ENCODE measurements at regions of chr5 and their contacts with region 1.

Region 1: DNA sequence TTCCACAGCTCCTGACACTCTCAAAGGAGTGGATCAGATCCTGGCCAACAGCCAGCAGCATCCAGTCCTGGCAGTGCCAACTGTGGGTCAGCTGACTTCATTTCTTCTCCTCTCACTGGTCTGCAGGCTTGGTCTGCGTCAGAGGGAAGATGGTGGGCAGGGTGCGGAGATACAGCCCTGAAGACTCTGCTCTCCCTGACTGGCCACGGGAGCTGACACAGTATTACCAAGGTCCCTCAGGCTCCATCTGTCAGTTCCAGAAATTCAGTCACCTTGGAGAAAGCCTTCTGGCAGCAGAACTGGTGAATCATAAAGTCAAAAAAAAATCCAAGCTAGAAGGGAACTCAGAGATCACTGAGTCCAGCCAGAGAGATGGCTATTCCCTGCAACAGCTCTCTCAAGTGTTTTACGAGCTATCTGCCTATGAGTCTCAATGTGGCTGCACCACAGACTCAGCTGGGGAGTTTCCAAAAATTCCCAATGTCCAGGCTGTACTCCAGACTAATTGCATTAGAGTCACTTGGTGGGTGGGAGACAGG is 28.0 kb downstream of the C1QTNF2 start:
- DNase-seq: no peak
- ATAC-seq: no peak
- H3K4me3 Mint-ChIP-seq: no peak overlapping the region
- H3K27ac Mint-ChIP-seq: no peak overlapping the region
- H3K4me1 Mint-ChIP-seq: peaks cover 6% of the 10 kb centered on the region
- H3K27me3 Mint-ChIP-seq: no peaks in the 10 kb centered on the region
- CTCF ChIP-seq: no peak

Region 2: GRCh38 chr5:160021831-160022446 is 320.5 kb before region 1 on chr5:
- CTCF ChIA-PET with region 1: interaction called, 38 read pairs
- POLR2A ChIA-PET with region 1: no interaction called
- intact Hi-C with region 1: loop called (anchors 5 kb)
- DNase-seq: peak; percentile 56
- ATAC-seq: peak; percentile 98
- H3K4me3 Mint-ChIP-seq: no peak overlapping the region
- H3K27ac Mint-ChIP-seq: no peak overlapping the region
- H3K4me1 Mint-ChIP-seq: peaks cover 29% of the 10 kb centered on the region
- H3K27me3 Mint-ChIP-seq: no peaks in the 10 kb centered on the region
- CTCF ChIP-seq: peak; percentile 93

Region 3: DNA sequence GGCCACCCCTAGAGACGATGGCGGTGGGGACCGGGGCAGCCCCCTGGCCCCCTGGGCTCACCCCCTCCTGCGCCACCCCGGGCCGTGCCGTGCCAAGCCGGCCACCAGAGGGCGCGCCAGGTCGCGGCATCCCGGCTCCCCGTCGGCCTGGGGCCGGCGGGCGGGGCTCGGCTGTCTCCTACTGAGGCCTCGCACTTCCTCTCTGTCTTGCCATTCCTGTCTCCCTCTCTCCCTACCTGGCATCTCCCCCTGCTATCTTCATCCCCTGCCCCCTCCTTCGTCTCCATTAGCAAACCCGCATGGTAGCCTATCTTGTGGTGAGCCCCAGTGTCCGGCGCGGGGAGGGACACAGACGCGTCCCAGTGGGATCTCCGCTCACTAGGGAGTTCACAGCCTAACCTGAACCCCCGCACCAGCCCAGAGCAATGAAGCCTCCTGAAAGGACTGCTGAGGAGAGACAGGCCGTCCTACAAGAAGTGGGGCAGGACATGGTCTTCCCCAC is 143.0 kb before region 1 on chr5:
- CTCF ChIA-PET with region 1: interaction called, 119 read pairs
- POLR2A ChIA-PET with region 1: no interaction called
- intact Hi-C with region 1: loop called (anchors 1 kb)
- DNase-seq: peak; percentile 73
- ATAC-seq: peak; percentile 100
- H3K4me3 Mint-ChIP-seq: peak overlapping the region; percentile 58
- H3K27ac Mint-ChIP-seq: no peak overlapping the region
- H3K4me1 Mint-ChIP-seq: peaks cover 6% of the 10 kb centered on the region
- H3K27me3 Mint-ChIP-seq: peaks cover 4% of the 10 kb centered on the region
- CTCF ChIP-seq: peak; percentile 84

Region 4: GRCh38 chr5:160312134-160312959 is 30.1 kb before region 1 on chr5 and contains the start of gene CCNJL:
- CTCF ChIA-PET with region 1: interaction called, 10 read pairs
- POLR2A ChIA-PET with region 1: no interaction called
- intact Hi-C with region 1: no loop called
- DNase-seq: peak; percentile 23
- ATAC-seq: peak; percentile 61
- H3K4me3 Mint-ChIP-seq: peak within 1 kb of the TSS; percentile 68
- H3K27ac Mint-ChIP-seq: no peak within 1 kb of the TSS
- H3K4me1 Mint-ChIP-seq: peaks cover 8% of the 10 kb centered on the region
- H3K27me3 Mint-ChIP-seq: peaks cover 54% of the 10 kb centered on the region
- CTCF ChIP-seq: no peak
- total RNA-seq, gene CCNJL: not detected

Region 5: GRCh38 chr5:160324886-160325285 is 17.6 kb before region 1 on chr5:
- CTCF ChIA-PET with region 1: no interaction called
- POLR2A ChIA-PET with region 1: no interaction called
- intact Hi-C with region 1: no loop called
- DNase-seq: no peak
- ATAC-seq: no peak
- H3K4me3 Mint-ChIP-seq: no peak overlapping the region
- H3K27ac Mint-ChIP-seq: no peak overlapping the region
- H3K4me1 Mint-ChIP-seq: peaks cover 2% of the 10 kb centered on the region
- H3K27me3 Mint-ChIP-seq: peaks cover 4% of the 10 kb centered on the region
- CTCF ChIP-seq: no peak

Region 6: GRCh38 chr5:160357861-160358411 is 15.5 kb after region 1 on chr5:
- CTCF ChIA-PET with region 1: interaction called, 12 read pairs
- POLR2A ChIA-PET with region 1: no interaction called
- intact Hi-C with region 1: no loop called
- DNase-seq: no peak
- ATAC-seq: no peak
- H3K4me3 Mint-ChIP-seq: no peak overlapping the region
- H3K27ac Mint-ChIP-seq: no peak overlapping the region
- H3K4me1 Mint-ChIP-seq: no peaks in the 10 kb centered on the region
- H3K27me3 Mint-ChIP-seq: no peaks in the 10 kb centered on the region
- CTCF ChIP-seq: no peak

Region 7: DNA sequence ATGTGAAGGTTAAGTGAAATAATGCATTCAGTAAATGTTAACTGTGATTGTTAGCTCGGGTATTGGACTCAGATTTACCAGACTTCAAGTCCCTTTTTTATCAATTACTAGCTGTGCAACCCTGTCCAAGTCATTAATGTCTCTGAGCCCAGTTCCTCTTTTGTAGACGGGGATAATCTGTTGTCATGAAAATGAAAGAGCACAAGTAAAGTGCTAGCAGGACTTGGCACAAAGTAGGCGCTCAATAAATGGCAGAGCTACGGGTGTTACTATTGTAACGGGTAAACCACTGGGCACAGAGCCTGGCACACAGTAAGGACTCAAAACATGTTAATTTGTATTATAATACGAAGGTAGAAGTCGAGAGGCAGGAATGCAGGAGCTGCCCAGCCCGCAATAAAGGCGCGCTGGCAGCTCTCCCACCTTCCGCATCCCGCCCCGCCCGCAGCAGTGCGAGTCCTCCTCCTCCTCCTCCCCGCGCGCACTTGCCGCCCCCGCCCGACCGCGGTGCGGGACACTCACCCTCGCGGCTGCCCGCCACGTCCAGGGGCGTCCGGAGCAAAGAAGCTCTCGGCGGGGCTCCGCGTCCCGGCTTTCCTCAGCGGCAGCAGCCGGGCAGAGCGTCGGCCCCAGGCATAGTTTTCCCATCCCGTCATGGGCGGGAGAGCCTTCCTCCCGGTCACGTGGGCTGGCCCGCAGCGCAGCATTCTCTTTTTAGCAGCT is 27.7 kb after region 1 on chr5 and contains the start of gene C1QTNF2:
- CTCF ChIA-PET with region 1: interaction called, 10 read pairs
- POLR2A ChIA-PET with region 1: no interaction called
- intact Hi-C with region 1: no loop called
- DNase-seq: peak; percentile 14
- ATAC-seq: peak; percentile 37
- H3K4me3 Mint-ChIP-seq: peak within 1 kb of the TSS; percentile 2
- H3K27ac Mint-ChIP-seq: no peak within 1 kb of the TSS
- H3K4me1 Mint-ChIP-seq: peaks cover 10% of the 10 kb centered on the region
- H3K27me3 Mint-ChIP-seq: peaks cover 62% of the 10 kb centered on the region
- CTCF ChIP-seq: no peak
- total RNA-seq, gene C1QTNF2: not detected

Region 8: GRCh38 chr5:160390787-160391696 is 48.6 kb after region 1 on chr5:
- CTCF ChIA-PET with region 1: interaction called, 12 read pairs
- POLR2A ChIA-PET with region 1: no interaction called
- intact Hi-C with region 1: no loop called
- DNase-seq: no peak
- ATAC-seq: no peak
- H3K4me3 Mint-ChIP-seq: no peak overlapping the region
- H3K27ac Mint-ChIP-seq: no peak overlapping the region
- H3K4me1 Mint-ChIP-seq: no peaks in the 10 kb centered on the region
- H3K27me3 Mint-ChIP-seq: no peaks in the 10 kb centered on the region
- CTCF ChIP-seq: peak; percentile 56

Region 9: DNA sequence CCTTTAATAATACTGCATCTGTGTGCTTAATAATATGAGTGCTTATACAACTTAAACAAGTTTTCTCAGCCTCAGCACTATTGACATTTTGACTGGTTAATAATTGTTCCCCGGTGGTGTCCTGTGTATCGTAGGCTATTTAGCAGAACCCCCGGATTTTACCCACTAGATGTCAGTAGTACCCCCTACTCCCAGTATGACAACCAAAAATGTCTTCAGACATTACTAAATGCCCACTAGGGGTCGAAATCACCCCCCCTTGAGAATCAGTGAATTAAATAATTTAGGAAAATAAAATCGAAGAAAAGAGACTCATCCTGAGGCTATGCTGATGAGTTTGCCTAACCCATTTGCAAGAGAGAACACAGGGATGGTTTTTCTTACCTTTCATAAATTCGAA is 343.2 kb after region 1 on chr5:
- CTCF ChIA-PET with region 1: no interaction called
- POLR2A ChIA-PET with region 1: no interaction called
- intact Hi-C with region 1: no loop called
- DNase-seq: no peak
- ATAC-seq: no peak
- H3K4me3 Mint-ChIP-seq: no peak overlapping the region
- H3K27ac Mint-ChIP-seq: no peak overlapping the region
- H3K4me1 Mint-ChIP-seq: no peaks in the 10 kb centered on the region
- H3K27me3 Mint-ChIP-seq: peaks cover 3% of the 10 kb centered on the region
- CTCF ChIP-seq: no peak